Psoas muscle (tissue), 8 donors: ENCODE measurements at regions of chr13 and their contacts with region 1.

Region 1: DNA sequence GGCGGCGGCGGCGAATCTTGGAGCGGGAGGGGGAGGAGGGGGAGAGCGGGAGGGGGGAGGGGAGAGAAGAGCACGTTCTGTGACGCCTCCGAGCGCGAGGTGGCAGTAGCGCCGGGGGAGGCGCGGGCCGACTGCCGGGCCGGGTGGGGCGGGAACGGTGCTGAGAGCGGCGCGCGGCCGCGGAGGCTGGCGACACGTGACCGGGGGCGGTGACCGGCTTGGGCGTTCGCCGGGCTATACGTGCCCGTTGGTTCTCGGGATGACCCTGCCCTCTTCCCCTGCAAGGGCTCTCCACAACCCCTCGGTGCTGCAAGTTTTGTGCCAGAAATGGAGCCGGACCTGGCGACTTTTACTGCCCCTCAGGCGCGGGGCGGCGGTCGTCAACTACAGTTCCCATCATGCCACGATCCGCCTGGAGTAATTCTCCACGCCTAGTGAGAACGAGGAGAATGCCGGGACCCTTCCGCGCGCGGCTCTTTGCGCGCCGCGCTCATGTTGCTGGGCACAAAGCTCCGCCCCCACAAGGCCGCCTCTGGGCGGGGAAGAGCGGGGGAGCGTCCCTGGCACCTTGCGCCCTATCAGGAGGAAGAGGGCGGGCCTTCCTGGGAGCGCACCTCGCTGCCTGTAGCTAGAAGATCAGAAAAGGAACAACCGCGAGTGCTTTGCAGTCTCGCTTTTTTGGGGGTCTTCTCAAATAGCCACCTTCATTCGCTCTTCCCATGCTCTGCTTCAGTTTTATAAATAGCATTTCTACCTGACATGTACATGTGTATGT is at the start of gene KPNA3:
- DNase-seq: peak; percentile 95 to 98
- ATAC-seq: peak; percentile 93 to 95 (median 94)
- H3K4me3 ChIP-seq: peak within 1 kb of the TSS; percentile 95
- H3K27ac ChIP-seq: peak within 1 kb of the TSS; percentile 97
- H3K4me1 ChIP-seq: peaks cover 33% of the 10 kb centered on the region
- H3K27me3 ChIP-seq: no peaks in the 10 kb centered on the region
- CTCF ChIP-seq: no peak
- total RNA-seq, gene KPNA3: 127 to 157 (median 147) TPM

Region 2: GRCh38 chr13:48000778-48001628 is 1791.7 kb before region 1 on chr13 and contains the start of gene SUCLA2:
- intact Hi-C with region 1: no loop called
- DNase-seq: peak; percentile 94 to 95
- ATAC-seq: peak; percentile 99 to 100 (median 100)
- H3K4me3 ChIP-seq: peak within 1 kb of the TSS; percentile 97
- H3K27ac ChIP-seq: peak within 1 kb of the TSS; percentile 91
- H3K4me1 ChIP-seq: peaks cover 4% of the 10 kb centered on the region
- H3K27me3 ChIP-seq: no peaks in the 10 kb centered on the region
- CTCF ChIP-seq: no peak
- total RNA-seq, gene SUCLA2: 96.7 to 111 (median 103) TPM

Region 3: DNA sequence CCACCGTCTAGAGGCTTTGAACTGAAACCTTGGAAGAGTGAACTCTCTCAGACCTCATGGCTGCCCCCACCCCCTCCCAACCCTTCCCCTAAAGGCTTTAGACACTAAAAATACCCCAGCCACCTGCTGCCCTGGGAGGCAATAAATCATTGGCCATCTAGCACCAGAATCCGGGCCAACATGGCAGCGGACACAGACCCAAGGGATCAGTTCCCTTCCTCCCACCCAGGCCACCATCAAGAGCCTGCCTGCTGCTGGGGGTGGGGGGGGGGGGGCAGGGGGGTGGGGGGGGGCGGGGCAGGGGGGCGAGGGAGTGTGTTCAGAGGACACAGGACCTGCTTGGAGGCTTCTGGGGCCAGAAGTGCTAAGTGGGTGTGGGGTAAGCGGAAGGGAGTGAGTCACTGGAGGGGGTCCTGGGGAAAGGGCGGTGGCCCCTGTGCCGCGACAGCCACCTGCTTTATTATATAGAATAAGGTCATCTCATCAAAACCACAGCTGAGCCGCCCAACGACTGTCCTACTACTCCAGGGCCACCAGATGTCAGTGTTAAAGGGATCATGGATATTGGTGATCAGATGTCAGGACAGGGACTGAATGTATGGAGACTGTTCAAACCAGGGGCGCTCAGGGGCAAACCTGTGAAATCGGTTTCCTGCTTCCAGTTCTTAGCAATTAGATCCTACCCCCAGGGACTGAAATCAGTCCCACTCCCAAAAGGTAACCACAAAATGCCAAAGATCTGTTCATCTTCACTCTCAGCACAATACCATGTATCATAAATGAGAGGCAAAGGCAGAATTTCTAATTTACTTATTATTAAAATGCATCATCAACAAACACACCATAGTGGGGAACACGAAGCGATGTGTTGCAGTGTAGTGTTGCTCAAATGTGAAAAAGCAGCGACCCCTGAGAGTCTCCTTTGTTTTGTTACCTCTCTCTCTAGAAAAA is 140.1 kb before region 1 on chr13:
- intact Hi-C with region 1: loop called (anchors 2 to 5 kb)
- DNase-seq: peak; percentile 74 to 92
- ATAC-seq: peak; percentile 76 to 82 (median 78)
- H3K4me3 ChIP-seq: peak overlapping the region; percentile 51
- H3K27ac ChIP-seq: peak overlapping the region; percentile 97
- H3K4me1 ChIP-seq: peaks cover 68% of the 10 kb centered on the region
- H3K27me3 ChIP-seq: no peaks in the 10 kb centered on the region
- CTCF ChIP-seq: peak; percentile 66

Region 4: DNA sequence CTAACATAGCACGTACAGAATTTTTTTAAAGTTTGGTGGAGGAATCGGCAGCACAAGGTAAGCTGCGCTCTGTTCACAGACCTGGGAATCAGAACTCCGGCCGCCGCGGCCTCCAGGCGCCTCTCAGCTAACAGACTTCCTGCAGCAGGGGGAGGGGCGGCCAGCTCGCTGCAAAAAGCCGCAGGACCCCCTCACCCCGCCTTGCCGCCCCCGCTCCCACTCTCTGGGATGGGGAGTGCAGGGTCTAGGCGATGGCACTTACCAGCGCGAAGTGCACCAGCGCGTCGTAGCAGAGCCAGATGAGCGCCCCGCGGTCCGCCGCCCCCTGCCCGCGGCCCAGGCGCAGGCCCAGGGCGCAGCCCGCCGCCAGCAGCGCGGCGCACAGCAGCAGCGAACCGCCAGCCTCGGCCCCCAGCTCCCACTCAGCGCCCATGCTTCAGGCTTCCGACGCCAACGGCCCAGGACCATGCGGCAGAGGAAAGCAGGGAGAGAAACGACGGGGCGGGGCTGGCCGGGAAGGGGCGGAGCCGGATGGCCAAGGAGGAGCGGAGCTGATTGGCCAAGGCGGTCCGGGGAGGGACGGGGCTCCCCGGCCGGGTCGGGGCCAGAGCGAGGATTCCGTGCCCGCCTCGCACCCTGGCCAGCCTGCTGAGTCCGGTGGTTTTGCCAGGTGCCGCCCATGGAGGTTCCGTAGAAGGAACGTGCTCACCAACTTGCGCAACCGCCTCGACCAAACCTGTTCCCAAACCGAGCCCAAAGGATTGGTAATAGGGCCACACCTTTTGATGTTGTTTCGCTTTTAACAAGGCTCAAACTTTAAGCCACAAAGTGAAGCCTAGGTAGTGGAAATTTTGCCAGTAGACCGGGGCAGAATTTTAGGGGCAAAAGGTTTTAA is 101.5 kb before region 1 on chr13 and contains the start of gene EBPL:
- intact Hi-C with region 1: loop called in 1 of 2 experiments (anchors 2 kb)
- DNase-seq: peak; percentile 95 to 96
- ATAC-seq: peak; percentile 96 to 97 (median 96)
- H3K4me3 ChIP-seq: peak within 1 kb of the TSS; percentile 92
- H3K27ac ChIP-seq: peak within 1 kb of the TSS; percentile 92
- H3K4me1 ChIP-seq: peaks cover 10% of the 10 kb centered on the region
- H3K27me3 ChIP-seq: no peaks in the 10 kb centered on the region
- CTCF ChIP-seq: no peak
- total RNA-seq, gene EBPL: 6.2 to 10.6 (median 8.4) TPM

Region 5: GRCh38 chr13:49759503-49759902 is 33.2 kb before region 1 on chr13:
- intact Hi-C with region 1: loop called in 1 of 2 experiments (anchors 1 kb)
- DNase-seq: no peak
- ATAC-seq: peak in 1 of 4 donors; percentile 31
- H3K4me3 ChIP-seq: no peak overlapping the region
- H3K27ac ChIP-seq: no peak overlapping the region
- H3K4me1 ChIP-seq: peaks cover 12% of the 10 kb centered on the region
- H3K27me3 ChIP-seq: no peaks in the 10 kb centered on the region
- CTCF ChIP-seq: no peak

Region 6: DNA sequence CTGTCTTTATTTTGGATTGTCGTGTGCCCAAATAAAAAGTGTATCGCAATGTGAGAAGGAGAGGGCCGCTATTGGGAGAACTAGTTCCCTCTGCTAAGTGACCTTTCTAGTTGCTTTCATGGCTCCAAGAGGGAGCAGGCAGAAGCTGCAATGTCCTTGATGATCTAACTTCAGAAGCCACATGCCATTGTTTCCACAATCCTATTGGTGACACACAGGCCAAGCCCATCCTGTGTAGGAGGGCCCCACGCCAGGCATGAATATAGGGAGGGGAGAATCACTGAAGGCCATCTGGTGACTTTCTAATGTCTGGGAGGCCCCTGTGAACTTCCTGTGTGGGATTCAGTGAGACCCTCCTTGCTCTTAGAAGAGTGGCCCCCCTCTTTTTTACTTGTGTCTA is 47.5 kb after region 1 on chr13:
- intact Hi-C with region 1: loop called in 1 of 2 experiments (anchors 5 kb)
- DNase-seq: no peak
- ATAC-seq: no peak
- H3K4me3 ChIP-seq: no peak overlapping the region
- H3K27ac ChIP-seq: no peak overlapping the region
- H3K4me1 ChIP-seq: no peaks in the 10 kb centered on the region
- H3K27me3 ChIP-seq: no peaks in the 10 kb centered on the region
- CTCF ChIP-seq: no peak

Region 7: DNA sequence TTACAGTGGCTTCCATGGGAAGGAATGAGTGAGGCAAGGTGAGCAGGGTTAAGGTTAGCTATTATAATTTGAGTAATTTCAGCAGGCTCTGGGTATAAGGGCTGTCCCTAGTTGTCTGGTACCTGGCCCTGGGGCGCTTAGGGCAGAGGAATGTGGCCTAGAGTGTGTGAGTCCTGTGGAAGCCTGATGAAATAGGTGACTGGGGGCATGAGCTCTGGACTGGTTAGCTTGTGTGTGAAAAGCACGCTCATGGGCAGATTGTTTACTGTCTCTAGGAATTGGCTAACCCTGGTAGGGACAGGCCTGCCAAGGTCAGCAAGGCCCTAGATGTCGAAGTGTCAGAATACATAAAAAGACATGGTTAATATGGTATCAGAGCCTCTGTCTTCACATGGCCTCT is 100.9 kb after region 1 on chr13:
- intact Hi-C with region 1: no loop called
- DNase-seq: no peak
- ATAC-seq: no peak
- H3K4me3 ChIP-seq: no peak overlapping the region
- H3K27ac ChIP-seq: no peak overlapping the region
- H3K4me1 ChIP-seq: no peaks in the 10 kb centered on the region
- H3K27me3 ChIP-seq: no peaks in the 10 kb centered on the region
- CTCF ChIP-seq: no peak

Region 8: DNA sequence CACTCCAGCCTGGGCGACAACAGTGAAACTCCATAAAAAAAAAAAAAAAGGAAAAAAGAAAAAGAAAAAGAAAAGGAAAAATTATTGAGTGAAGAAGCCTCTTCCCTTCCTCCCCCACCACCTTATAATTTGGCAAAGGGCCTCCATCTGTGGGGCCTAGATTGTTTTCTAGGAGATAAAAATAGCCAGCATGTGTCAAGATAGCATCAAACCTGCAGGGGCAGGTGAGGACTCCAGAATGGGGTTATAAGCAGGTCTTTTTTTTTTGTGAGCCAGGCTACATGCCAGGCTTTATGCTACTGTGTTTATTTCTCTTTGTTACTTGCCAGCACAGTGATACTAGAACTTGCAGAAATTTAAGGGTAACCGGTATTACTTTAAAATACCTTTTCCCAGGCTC is 192.4 kb after region 1 on chr13:
- intact Hi-C with region 1: no loop called
- DNase-seq: no peak
- ATAC-seq: peak; percentile 61 to 83 (median 70)
- H3K4me3 ChIP-seq: no peak overlapping the region
- H3K27ac ChIP-seq: peak overlapping the region; percentile 24
- H3K4me1 ChIP-seq: peaks cover 14% of the 10 kb centered on the region
- H3K27me3 ChIP-seq: no peaks in the 10 kb centered on the region
- CTCF ChIP-seq: no peak

Region 9: DNA sequence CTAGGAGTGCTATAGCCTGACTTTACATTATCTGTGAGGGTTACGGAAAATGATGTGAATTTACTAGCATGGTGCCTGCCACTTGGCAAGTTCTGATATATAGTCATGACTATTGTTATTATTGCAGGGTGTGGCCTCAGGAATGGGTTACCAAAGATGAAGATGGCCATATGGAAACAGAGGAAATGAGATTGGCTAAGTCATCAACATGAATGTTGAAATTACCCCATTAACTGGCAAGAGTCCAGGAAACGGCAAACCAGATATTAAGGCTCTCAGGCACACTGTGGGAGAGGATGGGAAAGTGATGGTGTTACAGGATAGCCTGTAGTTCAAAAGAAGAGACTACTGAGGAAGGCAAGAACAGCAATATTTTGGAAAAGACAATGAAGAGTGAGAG is 405.8 kb after region 1 on chr13:
- intact Hi-C with region 1: no loop called
- DNase-seq: no peak
- ATAC-seq: no peak
- H3K4me3 ChIP-seq: no peak overlapping the region
- H3K27ac ChIP-seq: no peak overlapping the region
- H3K4me1 ChIP-seq: no peaks in the 10 kb centered on the region
- H3K27me3 ChIP-seq: no peaks in the 10 kb centered on the region
- CTCF ChIP-seq: no peak

Region 10: GRCh38 chr13:51583875-51584730 is 1791.4 kb after region 1 on chr13 and contains the start of gene WDFY2:
- intact Hi-C with region 1: loop called in 1 of 2 experiments (anchors 10 kb)
- DNase-seq: peak; percentile 99 to 100
- ATAC-seq: peak; percentile 94 to 96 (median 95)
- H3K4me3 ChIP-seq: peak within 1 kb of the TSS; percentile 83
- H3K27ac ChIP-seq: peak within 1 kb of the TSS; percentile 84
- H3K4me1 ChIP-seq: peaks cover 12% of the 10 kb centered on the region
- H3K27me3 ChIP-seq: no peaks in the 10 kb centered on the region
- CTCF ChIP-seq: no peak
- total RNA-seq, gene WDFY2: 1.4 to 2.3 (median 1.9) TPM